Activated CD4-positive, alpha-beta memory T cell treated with anti-CD3 and anti-CD28 coated beads for 36 hours (primary cell): ENCODE measurements at regions of chr6 and their contacts with region 1.

Region 1: DNA sequence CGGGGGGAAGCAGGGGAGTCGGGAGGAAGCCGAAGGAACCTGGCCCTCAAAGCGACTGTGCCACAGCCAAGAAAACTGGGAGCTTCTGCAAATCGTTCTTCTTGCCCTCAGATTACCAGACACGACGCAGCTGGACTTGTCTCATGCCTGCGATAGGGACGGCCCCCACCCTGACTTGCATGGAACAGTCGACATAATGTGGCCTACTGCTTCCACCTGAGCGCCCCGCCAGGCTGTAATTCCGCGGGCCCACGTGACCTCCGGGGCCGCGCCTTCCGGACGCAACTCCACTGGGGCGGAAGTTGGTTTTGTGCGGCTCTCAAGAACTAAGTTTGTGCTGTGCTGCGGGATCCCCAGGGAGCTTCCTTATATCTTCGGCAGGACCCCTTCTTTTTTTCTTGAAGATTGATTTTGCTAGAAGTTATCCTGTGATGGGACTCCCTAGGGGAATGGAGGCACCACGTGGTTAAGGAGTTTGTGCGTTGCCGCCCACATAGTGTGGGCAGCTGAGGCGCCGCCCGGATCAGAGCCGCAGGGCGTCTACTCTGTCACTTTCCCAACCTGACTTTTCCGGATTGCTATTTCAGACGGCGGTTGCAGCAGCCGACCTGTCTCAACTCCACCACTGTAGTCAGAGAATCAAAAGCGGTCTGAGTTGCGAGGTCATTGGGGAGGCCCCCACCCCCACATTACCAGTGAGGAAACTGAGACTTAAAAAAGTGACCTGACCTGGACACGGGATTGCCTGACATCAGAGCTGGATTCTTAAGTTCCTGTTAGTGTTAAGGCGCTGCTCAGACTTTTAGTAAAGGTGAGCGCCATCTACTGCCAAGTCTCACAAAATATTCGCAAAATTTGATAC is 540 bp upstream of the CD164 start:
- DNase-seq: peak; percentile 94
- H3K4me3 Mint-ChIP-seq: peak overlapping the region; percentile 95
- H3K27ac Mint-ChIP-seq: peak overlapping the region; percentile 99
- H3K4me1 Mint-ChIP-seq: peaks cover 35% of the 10 kb centered on the region
- H3K27me3 Mint-ChIP-seq: no peaks in the 10 kb centered on the region

Region 2: DNA sequence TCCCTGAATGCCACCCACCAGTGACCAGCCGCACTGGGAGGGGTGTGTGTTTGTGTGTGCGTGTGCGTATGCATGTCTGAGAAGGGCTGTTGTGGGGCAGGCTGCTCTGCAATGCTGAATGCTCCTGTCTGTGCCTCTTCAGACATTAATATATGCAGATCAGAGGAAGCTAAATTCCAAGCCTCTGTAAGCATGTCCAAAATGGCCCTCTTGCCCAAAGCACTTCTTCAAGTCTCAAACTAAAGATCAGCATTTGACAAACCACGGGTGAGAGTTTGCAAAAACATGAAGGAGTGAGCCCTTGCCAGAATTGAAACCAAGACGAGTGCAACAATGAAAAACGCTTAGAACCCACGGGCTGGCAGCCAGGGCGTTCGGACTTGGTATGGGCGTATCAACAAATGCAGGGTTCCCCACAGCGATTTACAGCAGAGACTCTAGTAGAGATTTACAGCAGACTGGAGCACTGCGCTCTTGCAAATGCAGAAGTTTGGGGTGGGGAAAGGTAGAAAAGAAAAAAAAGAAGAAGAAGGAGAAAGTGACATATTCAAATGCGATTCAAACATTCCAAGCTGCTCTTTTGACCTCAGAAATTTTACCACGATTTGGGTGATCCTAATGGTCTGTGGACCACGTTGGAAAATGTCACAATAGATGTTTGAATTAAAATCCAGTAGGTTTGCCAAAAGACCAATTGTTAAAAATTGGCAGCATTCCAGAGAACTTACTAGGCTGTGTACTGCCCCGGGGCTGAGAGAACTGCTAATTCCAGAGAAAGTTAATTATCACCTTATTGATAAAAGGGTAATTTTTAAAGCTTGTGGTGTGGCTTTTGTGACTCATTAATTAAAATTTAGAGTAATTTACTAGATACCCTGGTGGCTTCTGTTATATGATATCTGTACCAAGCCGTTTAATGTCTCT is 1562.2 kb before region 1 on chr6:
- CTCF ChIA-PET with region 1: no interaction called
- POLR2A ChIA-PET with region 1: no interaction called
- intact Hi-C with region 1: loop called (anchors 10 kb)
- DNase-seq: peak; percentile 45
- H3K4me3 Mint-ChIP-seq: peak overlapping the region; percentile 86
- H3K27ac Mint-ChIP-seq: peak overlapping the region; percentile 80
- H3K4me1 Mint-ChIP-seq: peaks cover 83% of the 10 kb centered on the region
- H3K27me3 Mint-ChIP-seq: no peaks in the 10 kb centered on the region

Region 3: GRCh38 chr6:108558372-108559096 is 824.3 kb before region 1 on chr6:
- CTCF ChIA-PET with region 1: no interaction called
- POLR2A ChIA-PET with region 1: interaction called, 3 read pairs
- intact Hi-C with region 1: loop called (anchors 1 kb)
- DNase-seq: peak; percentile 97
- H3K4me3 Mint-ChIP-seq: peak overlapping the region; percentile 93
- H3K27ac Mint-ChIP-seq: peak overlapping the region; percentile 96
- H3K4me1 Mint-ChIP-seq: peaks cover 25% of the 10 kb centered on the region
- H3K27me3 Mint-ChIP-seq: no peaks in the 10 kb centered on the region

Region 4: DNA sequence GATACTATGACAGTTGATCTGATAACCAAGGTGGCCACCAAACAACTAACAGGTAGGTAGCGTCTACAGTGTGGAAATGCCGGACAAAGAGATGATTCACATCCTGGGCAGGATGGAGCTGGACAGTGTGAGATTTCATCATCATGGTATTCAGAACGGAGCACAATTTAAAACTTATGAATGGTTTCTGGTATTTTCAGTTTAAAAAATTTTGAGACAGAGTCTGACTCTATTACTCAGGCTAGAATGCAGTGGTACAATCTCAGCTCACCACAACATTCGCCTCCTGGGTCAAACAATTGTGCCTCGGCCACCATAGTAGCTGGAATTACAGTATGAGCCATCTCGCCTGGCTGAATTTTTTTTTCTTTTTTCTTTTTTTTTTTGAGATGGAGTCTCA is 243.7 kb before region 1 on chr6:
- CTCF ChIA-PET with region 1: no interaction called
- POLR2A ChIA-PET with region 1: no interaction called
- intact Hi-C with region 1: no loop called
- DNase-seq: no peak
- H3K4me3 Mint-ChIP-seq: no peak overlapping the region
- H3K27ac Mint-ChIP-seq: no peak overlapping the region
- H3K4me1 Mint-ChIP-seq: no peaks in the 10 kb centered on the region
- H3K27me3 Mint-ChIP-seq: no peaks in the 10 kb centered on the region

Region 5: DNA sequence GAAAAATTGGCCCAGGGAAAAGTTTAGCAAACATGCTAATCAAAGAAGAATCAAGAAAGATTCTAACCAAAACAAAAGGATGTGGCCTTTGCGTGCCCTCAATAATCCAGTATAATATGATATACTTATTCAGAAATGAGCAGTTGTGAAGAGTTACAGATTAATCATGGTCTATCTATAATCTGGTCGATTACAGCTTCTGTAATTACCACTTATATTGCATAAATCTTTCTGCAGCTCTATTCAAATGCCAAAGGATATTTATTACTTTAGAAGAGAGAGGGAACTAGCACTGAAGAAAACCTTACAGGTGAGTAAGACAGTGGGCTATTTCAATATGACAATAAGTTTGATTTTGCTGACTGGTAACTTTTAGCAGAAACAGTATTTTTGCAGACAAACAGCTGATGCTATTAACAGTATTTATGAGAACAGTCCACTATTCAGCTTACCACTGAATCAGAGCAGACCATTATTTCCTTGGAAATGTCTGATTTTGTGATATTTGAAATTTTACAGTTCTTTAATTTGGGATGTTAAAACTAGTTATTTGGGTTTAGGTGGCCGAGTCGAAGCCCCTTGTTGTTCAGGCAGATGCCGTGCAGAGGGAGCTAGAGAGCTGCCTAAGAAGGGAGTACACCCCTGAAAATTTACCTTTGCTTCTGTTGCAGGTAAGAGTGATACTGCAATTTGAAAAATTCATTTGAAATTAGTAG is 195.2 kb before region 1 on chr6:
- CTCF ChIA-PET with region 1: interaction called, 139 read pairs
- POLR2A ChIA-PET with region 1: interaction called, 7 read pairs
- intact Hi-C with region 1: loop called (anchors 1 kb)
- DNase-seq: peak; percentile 69
- H3K4me3 Mint-ChIP-seq: no peak overlapping the region
- H3K27ac Mint-ChIP-seq: no peak overlapping the region
- H3K4me1 Mint-ChIP-seq: peaks cover 2% of the 10 kb centered on the region
- H3K27me3 Mint-ChIP-seq: peaks cover 19% of the 10 kb centered on the region

Region 6: GRCh38 chr6:109279628-109280027 is 103.2 kb before region 1 on chr6:
- CTCF ChIA-PET with region 1: no interaction called
- POLR2A ChIA-PET with region 1: no interaction called
- intact Hi-C with region 1: no loop called
- DNase-seq: no peak
- H3K4me3 Mint-ChIP-seq: no peak overlapping the region
- H3K27ac Mint-ChIP-seq: no peak overlapping the region
- H3K4me1 Mint-ChIP-seq: no peaks in the 10 kb centered on the region
- H3K27me3 Mint-ChIP-seq: peaks cover 3% of the 10 kb centered on the region

Region 7: GRCh38 chr6:109308018-109308492 is 74.8 kb before region 1 on chr6:
- CTCF ChIA-PET with region 1: interaction called, 3 read pairs
- POLR2A ChIA-PET with region 1: interaction called, 3 read pairs
- intact Hi-C with region 1: loop called (anchors 2 kb)
- DNase-seq: peak; percentile 70
- H3K4me3 Mint-ChIP-seq: no peak overlapping the region
- H3K27ac Mint-ChIP-seq: peak overlapping the region; percentile 57
- H3K4me1 Mint-ChIP-seq: peaks cover 31% of the 10 kb centered on the region
- H3K27me3 Mint-ChIP-seq: no peaks in the 10 kb centered on the region

Region 8: DNA sequence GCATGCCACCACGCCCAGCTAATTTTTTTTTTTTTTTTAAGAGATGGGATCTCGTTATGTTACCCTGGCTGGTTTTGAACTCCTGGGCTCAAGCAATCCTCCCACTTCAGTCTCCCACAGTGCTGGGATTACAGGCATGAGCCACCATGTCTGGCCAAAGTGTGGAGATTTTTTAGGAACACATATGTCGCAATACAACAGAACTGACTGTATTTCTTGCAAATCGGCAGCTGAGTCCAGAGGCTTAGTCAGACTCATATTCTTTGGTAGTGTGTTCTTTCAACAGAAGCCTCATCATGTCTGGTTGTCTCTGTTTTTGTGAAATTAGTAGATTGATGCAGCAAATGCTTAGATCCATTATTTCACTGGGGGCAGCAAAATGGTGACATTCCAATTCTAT is 23.4 kb after region 1 on chr6:
- CTCF ChIA-PET with region 1: no interaction called
- POLR2A ChIA-PET with region 1: no interaction called
- intact Hi-C with region 1: no loop called
- DNase-seq: no peak
- H3K4me3 Mint-ChIP-seq: no peak overlapping the region
- H3K27ac Mint-ChIP-seq: no peak overlapping the region
- H3K4me1 Mint-ChIP-seq: no peaks in the 10 kb centered on the region
- H3K27me3 Mint-ChIP-seq: peaks cover 2% of the 10 kb centered on the region

Region 9: GRCh38 chr6:109455502-109456282 is 72.9 kb after region 1 on chr6 and contains the start of gene MICAL1:
- CTCF ChIA-PET with region 1: interaction called, 5 read pairs
- POLR2A ChIA-PET with region 1: interaction called, 20 read pairs
- intact Hi-C with region 1: loop called (anchors 1 kb)
- DNase-seq: peak; percentile 78
- H3K4me3 Mint-ChIP-seq: peak within 1 kb of the TSS; percentile 93
- H3K27ac Mint-ChIP-seq: peak within 1 kb of the TSS; percentile 90
- H3K4me1 Mint-ChIP-seq: peaks cover 65% of the 10 kb centered on the region
- H3K27me3 Mint-ChIP-seq: no peaks in the 10 kb centered on the region
- total RNA-seq, gene MICAL1: 39.4 to 45.0 TPM

Region 10: GRCh38 chr6:110179401-110180227 is 796.8 kb after region 1 on chr6 and contains the start of gene WASF1:
- CTCF ChIA-PET with region 1: no interaction called
- POLR2A ChIA-PET with region 1: interaction called, 3 read pairs
- intact Hi-C with region 1: loop called (anchors 5 kb)
- DNase-seq: peak; percentile 94
- H3K4me3 Mint-ChIP-seq: peak within 1 kb of the TSS; percentile 85
- H3K27ac Mint-ChIP-seq: no peak within 1 kb of the TSS
- H3K4me1 Mint-ChIP-seq: peaks cover 5% of the 10 kb centered on the region
- H3K27me3 Mint-ChIP-seq: peaks cover 10% of the 10 kb centered on the region
- total RNA-seq, gene WASF1: 1.9 to 2.6 TPM